Activated T-helper 2 cell treated with anti-CD3 and anti-CD28 coated beads, Interferon-gamma antibody, Interleukin-2, Interleukin-4, amounts not matched to agents 10 μg/mL and 5 μg/mL and 100 μg/mL, durations not matched to agents 14 hours and 24 hours and 36 hours (primary cell): ENCODE measurements at regions of chr13 and their contacts with region 1.

Region 1: DNA sequence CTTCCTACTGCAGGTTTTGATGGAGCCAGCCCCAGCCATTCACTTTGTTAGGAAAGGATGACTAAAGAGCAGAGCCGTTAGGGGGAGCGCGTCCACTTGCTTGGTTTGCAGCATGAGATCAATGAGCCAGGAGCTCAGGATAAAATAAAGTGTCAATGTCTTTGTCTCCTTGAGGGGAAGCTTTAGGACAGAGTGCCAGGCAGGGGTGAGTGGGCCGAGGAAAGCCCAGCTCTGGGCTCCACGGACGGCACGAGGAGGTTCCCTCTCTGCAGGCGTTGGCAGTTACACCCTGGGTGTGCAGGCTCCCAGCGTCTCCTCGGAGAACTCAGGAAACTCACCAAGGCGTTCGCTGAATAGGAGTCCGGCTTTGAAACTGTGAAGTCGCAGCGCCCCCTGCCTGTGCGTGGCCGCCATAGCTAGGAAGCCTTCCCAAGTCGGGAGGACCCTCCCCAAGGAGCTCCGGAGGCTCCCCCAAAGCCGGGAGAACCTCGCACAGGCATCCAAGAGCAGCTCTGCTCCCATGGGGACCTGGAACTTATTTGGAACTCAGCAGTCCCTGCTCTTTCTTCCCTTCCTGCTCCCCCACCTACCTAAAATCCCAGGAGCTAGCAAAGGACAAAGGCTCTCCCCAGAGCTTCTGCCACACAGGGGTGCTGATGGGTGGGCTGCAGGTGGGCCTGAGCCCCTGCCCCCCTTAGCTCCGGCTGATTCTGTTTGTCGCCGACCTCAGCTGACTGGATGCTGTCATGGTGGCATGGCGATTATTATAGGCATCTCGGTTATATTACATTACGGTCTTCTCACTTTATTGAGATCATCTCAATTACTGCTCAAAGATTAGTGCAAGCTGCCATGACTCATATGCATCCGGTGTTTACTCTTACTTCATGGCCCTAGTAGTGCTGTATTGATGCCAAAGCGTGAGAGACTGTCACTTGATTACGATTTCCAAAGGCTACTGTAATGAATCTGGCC is 34.4 kb downstream of the GSX1 start:
- DNase-seq: peak; percentile 50
- H3K4me3 Mint-ChIP-seq: no peak overlapping the region
- H3K27ac Mint-ChIP-seq: no peak overlapping the region
- H3K4me1 Mint-ChIP-seq: peaks cover 5% of the 10 kb centered on the region
- H3K27me3 Mint-ChIP-seq: peaks cover 72% of the 10 kb centered on the region

Region 2: GRCh38 chr13:27362064-27362883 is 464.4 kb before region 1 on chr13:
- intact Hi-C with region 1: loop called (anchors 1 kb)
- DNase-seq: peak; percentile 68
- H3K4me3 Mint-ChIP-seq: peak overlapping the region; percentile 30
- H3K27ac Mint-ChIP-seq: no peak overlapping the region
- H3K4me1 Mint-ChIP-seq: no peaks in the 10 kb centered on the region
- H3K27me3 Mint-ChIP-seq: peaks cover 25% of the 10 kb centered on the region

Region 3: GRCh38 chr13:27406178-27406939 is 420.3 kb before region 1 on chr13:
- intact Hi-C with region 1: loop called (anchors 1 kb)
- DNase-seq: peak; percentile 25
- H3K4me3 Mint-ChIP-seq: no peak overlapping the region
- H3K27ac Mint-ChIP-seq: no peak overlapping the region
- H3K4me1 Mint-ChIP-seq: peaks cover 8% of the 10 kb centered on the region
- H3K27me3 Mint-ChIP-seq: peaks cover 23% of the 10 kb centered on the region

Region 4: DNA sequence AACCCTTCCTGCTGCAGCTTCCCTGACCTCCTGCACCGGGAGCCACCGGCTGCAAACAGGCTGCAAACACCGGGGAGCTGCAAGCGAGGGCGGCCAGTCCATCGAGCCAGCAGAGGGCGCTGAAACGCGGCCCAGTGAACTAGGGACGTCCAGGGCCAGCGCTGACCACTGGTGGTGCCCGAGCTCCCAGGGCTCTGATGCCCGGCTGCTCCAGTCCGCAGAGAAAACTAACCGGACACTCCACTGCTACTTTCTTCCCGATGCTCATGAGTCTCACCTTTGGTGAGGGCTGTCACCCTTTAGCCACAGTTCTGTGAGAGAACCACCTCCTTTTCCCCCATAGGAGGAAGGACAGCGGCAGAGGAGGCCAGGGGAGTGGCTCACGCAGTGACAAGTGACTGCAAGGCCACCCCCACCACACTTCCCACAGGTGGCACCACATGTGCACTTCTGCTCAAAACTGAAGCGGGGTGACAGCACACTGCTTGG is 293.5 kb before region 1 on chr13:
- intact Hi-C with region 1: loop called (anchors 1 kb)
- DNase-seq: peak; percentile 14
- H3K4me3 Mint-ChIP-seq: no peak overlapping the region
- H3K27ac Mint-ChIP-seq: no peak overlapping the region
- H3K4me1 Mint-ChIP-seq: no peaks in the 10 kb centered on the region
- H3K27me3 Mint-ChIP-seq: peaks cover 12% of the 10 kb centered on the region

Region 5: DNA sequence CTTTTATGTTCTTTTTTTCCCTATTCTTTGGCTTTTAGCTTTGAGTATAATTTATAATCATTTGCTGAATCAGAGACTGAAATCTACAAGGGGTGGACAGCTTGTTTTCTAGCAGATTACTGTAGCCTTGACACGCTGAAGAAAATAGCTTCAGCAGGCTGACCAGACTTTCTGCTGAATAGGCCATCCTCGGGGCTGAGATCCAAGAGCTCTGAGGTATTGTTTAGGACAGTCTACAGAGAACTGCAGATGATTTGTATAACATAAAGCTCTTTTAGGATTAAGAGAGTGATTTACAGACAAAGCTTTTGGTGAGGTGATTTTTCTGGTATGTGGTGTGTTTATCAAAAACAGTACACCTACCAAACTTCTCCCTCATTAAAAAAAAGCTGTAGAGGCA is 188.1 kb before region 1 on chr13:
- intact Hi-C with region 1: no loop called
- DNase-seq: no peak
- H3K4me3 Mint-ChIP-seq: no peak overlapping the region
- H3K27ac Mint-ChIP-seq: no peak overlapping the region
- H3K4me1 Mint-ChIP-seq: peaks cover 51% of the 10 kb centered on the region
- H3K27me3 Mint-ChIP-seq: no peaks in the 10 kb centered on the region

Region 6: GRCh38 chr13:27792393-27793218 is 34.1 kb before region 1 on chr13 and contains the start of gene GSX1:
- intact Hi-C with region 1: loop called (anchors 2 kb)
- DNase-seq: peak; percentile 36
- H3K4me3 Mint-ChIP-seq: peak within 1 kb of the TSS; percentile 59
- H3K27ac Mint-ChIP-seq: no peak within 1 kb of the TSS
- H3K4me1 Mint-ChIP-seq: peaks cover 19% of the 10 kb centered on the region
- H3K27me3 Mint-ChIP-seq: peaks cover 73% of the 10 kb centered on the region
- total RNA-seq, gene GSX1: not detected in 2 replicates

Region 7: DNA sequence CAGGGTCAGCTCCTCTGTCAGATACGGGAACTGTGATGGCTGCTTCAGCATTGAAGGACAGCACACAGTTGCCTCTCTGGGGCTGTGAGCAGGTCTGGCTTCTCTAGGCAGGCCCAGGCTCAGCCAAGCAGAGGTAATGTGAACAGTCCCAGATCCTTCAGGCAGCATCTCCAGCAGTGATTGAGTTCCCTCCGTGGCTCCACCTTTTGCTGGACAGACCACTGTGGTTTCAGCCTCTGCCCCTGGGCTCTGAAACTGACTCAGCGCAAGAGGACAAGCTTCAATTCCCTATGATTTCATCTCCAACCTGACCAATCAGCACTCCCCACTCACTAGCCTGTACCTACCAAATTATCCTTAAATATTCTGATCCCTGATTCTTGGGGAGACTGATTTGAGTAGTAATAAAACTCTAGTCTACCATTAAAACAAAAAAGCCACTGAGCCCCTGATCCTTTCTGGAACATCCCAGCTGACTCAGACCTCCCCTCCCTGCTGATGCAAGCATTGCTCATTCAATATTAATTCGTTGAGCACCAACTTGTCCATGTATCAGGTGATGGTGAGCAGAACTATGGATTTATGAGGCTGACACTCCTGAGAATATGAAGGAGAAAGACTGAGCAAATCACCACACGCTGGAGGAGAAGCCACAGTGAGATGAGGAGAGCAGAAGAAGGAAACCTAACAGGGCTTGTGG is 17.7 kb before region 1 on chr13:
- intact Hi-C with region 1: no loop called
- DNase-seq: no peak
- H3K4me3 Mint-ChIP-seq: no peak overlapping the region
- H3K27ac Mint-ChIP-seq: no peak overlapping the region
- H3K4me1 Mint-ChIP-seq: no peaks in the 10 kb centered on the region
- H3K27me3 Mint-ChIP-seq: peaks cover 20% of the 10 kb centered on the region

Region 8: DNA sequence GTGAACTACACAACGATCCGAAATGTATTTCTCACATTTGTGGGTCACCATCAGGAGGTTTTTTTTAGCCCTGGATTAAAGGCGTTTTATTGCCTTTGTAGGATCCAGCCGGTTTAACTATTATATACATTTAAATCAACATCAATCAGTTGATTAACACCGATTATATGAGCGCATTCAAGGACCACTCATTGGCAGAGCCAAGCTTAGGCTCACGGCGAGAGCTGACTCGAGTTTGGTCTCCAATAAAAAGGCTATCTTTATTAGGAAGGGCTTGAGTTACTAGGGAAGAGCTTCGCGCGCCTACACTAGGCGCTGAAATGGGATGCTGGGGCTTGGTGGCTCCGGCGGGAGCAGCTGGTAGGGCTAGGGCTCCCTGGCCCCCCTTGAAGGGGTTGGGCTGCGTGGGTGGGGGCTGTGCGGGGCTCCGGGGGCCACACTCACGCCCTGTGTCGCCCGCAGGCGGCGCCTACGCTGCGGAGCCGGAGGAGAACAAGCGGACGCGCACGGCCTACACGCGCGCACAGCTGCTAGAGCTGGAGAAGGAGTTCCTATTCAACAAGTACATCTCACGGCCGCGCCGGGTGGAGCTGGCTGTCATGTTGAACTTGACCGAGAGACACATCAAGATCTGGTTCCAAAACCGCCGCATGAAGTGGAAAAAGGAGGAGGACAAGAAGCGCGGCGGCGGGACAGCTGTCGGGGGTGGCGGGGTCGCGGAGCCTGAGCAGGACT is 97.3 kb after region 1 on chr13:
- intact Hi-C with region 1: loop called (anchors 2 kb)
- DNase-seq: no peak
- H3K4me3 Mint-ChIP-seq: no peak overlapping the region
- H3K27ac Mint-ChIP-seq: peak overlapping the region; percentile 16
- H3K4me1 Mint-ChIP-seq: peaks cover 9% of the 10 kb centered on the region
- H3K27me3 Mint-ChIP-seq: peaks cover 85% of the 10 kb centered on the region

Region 9: GRCh38 chr13:27968316-27969081 is 141.8 kb after region 1 on chr13:
- intact Hi-C with region 1: loop called (anchors 5 kb)
- DNase-seq: no peak
- H3K4me3 Mint-ChIP-seq: no peak overlapping the region
- H3K27ac Mint-ChIP-seq: no peak overlapping the region
- H3K4me1 Mint-ChIP-seq: no peaks in the 10 kb centered on the region
- H3K27me3 Mint-ChIP-seq: peaks cover 81% of the 10 kb centered on the region

Region 10: DNA sequence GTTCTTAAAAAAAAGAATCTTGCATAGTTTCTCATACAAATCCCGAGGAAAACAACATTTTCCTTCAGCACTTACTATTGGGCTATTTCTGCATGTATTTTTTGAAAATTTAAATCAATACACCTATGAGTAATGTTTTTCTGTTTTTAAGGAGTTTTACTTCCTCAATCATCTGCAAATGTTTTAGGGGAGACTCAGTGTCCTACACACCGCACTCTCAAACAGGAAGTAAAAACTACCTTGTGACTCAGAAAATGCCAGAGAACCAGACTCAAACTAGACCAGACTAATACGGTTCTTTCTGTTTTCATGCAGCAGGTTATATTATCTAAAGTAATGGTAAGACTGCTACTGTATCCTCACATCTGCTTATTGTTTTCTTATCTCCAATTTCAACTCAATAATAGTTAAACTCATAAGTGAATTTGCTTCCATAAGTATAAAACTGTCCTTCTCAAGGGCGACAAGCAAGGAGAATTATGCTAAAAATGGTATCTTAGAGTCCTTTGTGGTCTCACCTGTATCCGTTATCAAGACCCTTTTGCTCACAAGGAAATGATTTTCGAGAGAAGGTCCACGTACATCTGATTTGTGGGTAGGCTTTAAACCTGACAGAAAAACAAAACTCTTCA is 221.2 kb after region 1 on chr13:
- intact Hi-C with region 1: no loop called
- DNase-seq: no peak
- H3K4me3 Mint-ChIP-seq: no peak overlapping the region
- H3K27ac Mint-ChIP-seq: no peak overlapping the region
- H3K4me1 Mint-ChIP-seq: peaks cover 7% of the 10 kb centered on the region
- H3K27me3 Mint-ChIP-seq: peaks cover 8% of the 10 kb centered on the region